Gastrocnemius medialis (tissue), 4 donors: ENCODE measurements at regions of chr18 and their contacts with region 1.

Region 1: DNA sequence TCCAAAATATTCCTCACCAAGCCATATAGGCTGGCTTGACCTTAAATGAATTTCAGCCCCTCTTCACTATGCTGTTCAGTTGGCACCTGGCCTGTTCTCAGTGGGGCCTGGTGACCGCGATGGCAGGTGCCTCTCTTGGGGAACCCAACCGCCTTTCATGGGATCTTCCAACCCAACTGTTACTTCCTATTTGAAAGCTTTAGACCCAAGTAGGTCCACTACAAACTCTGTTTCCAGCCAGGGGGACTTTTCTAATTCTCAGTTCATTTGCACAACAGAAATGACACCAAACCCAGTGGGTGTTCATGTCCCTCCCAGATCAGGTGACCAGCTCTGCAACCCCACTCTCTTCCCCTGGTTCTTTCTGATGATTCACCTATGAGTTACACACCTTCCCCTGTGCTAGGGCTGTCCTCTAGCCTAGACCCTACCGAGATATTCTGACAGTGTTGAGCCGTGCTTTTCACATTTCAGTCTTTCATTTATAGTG is 35.6 kb upstream of the NDUFV2 start:
- DNase-seq: no peak
- ATAC-seq: no peak
- H3K4me3 ChIP-seq: no peak overlapping the region
- H3K27ac ChIP-seq: no peak overlapping the region
- H3K4me1 ChIP-seq: peaks cover 0 to 7% of the 10 kb centered on the region in 2 donors
- H3K27me3 ChIP-seq: no peaks in the 10 kb centered on the region
- CTCF ChIP-seq: no peak
- POLR2A ChIP-seq: no peak

Region 2: DNA sequence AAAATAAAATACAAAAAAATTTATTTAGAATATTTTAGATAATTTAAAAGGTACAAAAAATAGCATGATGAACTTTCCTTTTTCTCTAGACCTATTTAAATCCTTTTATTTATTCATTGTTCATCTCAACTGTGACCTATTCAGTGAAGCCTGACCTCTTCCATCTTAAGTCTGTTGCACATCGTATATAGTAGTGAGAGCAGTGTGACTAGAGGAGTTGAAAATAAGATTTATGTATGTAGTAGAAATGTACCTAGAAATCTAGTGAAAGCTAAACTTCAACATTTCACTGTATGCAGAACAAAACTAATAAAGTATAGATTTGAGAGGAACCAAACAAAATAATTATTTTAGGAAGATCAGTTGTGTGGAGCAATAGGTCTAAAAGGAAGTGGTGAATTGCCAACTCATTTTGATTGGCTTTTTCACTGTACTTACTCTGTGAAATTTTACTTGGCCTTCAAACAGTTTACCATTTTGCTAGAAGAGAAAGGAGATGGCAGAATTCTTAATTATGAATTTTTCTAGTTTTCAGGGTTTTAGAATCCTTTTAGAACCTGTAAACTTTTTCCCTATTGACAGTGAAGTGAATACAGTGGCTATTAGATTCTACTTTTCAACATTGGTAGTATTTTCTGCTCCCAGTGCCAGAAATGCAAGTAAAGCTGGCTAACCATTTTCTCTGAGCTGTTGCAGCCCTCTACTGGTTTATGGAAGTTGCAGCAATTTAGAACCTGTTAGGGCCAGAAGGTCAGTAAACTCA is 80.8 kb after region 1 on chr18:
- in situ Hi-C with region 1: loop called (anchors 5 kb)
- intact Hi-C with region 1: no loop called
- DNase-seq: peak; percentile 26 to 39
- ATAC-seq: peak; percentile 90 to 95
- H3K4me3 ChIP-seq: no peak overlapping the region
- H3K27ac ChIP-seq: peak overlapping the region; percentile 24 to 65 (median 58)
- H3K4me1 ChIP-seq: peaks cover 76 to 78% of the 10 kb centered on the region in 2 donors
- H3K27me3 ChIP-seq: no peaks in the 10 kb centered on the region
- CTCF ChIP-seq: peak; percentile 68 to 87 (median 81)
- POLR2A ChIP-seq: no peak

Region 3: DNA sequence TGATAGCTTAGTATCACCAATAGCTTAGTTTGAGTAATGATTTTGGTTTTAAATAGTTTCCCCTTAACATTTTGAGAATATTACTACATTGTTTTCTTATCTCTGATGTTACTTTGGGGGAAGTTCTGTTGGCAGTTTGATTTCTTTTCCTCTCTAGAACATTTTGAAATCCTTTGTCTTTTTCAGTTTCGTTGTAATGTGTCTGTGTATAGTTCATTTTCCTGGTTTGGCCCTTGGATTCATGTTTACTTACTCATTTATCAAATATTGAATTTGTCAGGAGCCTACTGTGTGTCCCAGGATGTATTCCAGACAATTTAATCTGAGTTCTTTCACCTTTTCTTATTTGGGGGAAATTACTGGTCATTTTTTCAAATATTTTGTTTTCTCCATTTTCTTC is 86.4 kb after region 1 on chr18:
- in situ Hi-C with region 1: loop called (anchors 5 kb)
- intact Hi-C with region 1: no loop called
- DNase-seq: no peak
- ATAC-seq: no peak
- H3K4me3 ChIP-seq: no peak overlapping the region
- H3K27ac ChIP-seq: no peak overlapping the region
- H3K4me1 ChIP-seq: peaks cover 48 to 53% of the 10 kb centered on the region in 2 donors
- H3K27me3 ChIP-seq: no peaks in the 10 kb centered on the region
- CTCF ChIP-seq: no peak
- POLR2A ChIP-seq: no peak